Mammary epithelial cell (primary cell): ENCODE measurements at regions of chr7 and their contacts with region 1.

Region 1: DNA sequence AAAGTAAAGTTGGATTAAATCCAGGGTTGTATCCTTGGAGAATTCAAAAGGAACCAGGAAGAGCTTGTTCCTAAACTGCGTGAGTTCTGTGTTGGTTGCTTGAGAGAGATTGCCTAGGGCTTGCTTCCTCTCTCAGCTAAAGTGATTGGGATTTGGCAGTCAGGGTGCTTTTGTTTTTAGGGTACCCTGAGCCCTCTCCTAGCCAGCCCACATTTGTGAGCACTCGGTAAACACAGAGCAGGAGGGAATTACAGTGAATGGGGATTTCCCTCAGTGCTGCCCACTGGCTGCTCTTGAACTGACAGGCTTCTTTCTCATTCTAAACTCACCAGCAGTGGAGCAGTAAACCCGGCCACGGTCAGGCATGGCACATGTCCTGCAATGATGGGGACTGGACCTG is 146.9 kb downstream of the TPST1 start:
- DNase-seq: peak; percentile 76
- H3K4me3 ChIP-seq: peak overlapping the region in 2 of 3 experiments; percentile 31 to 38
- H3K27ac ChIP-seq: peak overlapping the region; percentile 92
- H3K4me1 ChIP-seq: peaks cover 55% of the 10 kb centered on the region
- H3K27me3 ChIP-seq: no peaks in the 10 kb centered on the region
- CTCF ChIP-seq: no peak

Region 2: GRCh38 chr7:66250711-66251110 is 101.4 kb before region 1 on chr7:
- CTCF ChIA-PET with region 1: no interaction called
- dilution Hi-C with region 1: no loop called
- in situ Hi-C with region 1: no loop called
- intact Hi-C with region 1: loop called (anchors 2 kb)
- DNase-seq: peak; percentile 99
- H3K4me3 ChIP-seq: no peak overlapping the region
- H3K27ac ChIP-seq: peak overlapping the region; percentile 93
- H3K4me1 ChIP-seq: peaks cover 30% of the 10 kb centered on the region
- H3K27me3 ChIP-seq: no peaks in the 10 kb centered on the region
- CTCF ChIP-seq: no peak

Region 3: DNA sequence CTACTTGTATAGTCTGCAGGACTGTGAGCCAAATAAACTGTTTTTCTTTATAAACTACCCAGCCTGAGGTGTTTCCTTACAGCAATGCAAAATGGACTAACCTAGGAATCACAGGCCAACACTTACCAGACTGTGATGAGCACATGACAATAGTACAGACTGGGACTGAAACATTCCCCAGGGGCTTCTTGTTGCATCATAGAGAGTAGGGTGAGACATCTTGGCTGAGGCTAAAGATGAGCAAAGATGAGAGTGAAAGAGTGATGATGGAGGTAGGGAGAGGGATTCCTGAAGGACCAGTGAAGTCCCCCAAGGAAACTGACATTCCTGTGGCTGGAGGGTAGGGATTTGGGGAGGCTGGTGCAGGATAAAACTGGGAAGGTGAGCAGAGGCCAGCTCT is 47.5 kb after region 1 on chr7:
- CTCF ChIA-PET with region 1: no interaction called
- dilution Hi-C with region 1: no loop called
- in situ Hi-C with region 1: no loop called
- intact Hi-C with region 1: loop called (anchors 5 kb)
- DNase-seq: peak; percentile 9
- H3K4me3 ChIP-seq: no peak overlapping the region
- H3K27ac ChIP-seq: no peak overlapping the region
- H3K4me1 ChIP-seq: peaks cover 19% of the 10 kb centered on the region
- H3K27me3 ChIP-seq: no peaks in the 10 kb centered on the region
- CTCF ChIP-seq: no peak